Panc1 (cell line): ENCODE measurements at regions of chr9 and their contacts with region 1.

Region 1: GRCh38 chr9:105608721-105609598 is 51.0 kb downstream of the FKTN start:
- DNase-seq: peak; percentile 1
- ATAC-seq: peak; percentile 68; the same call in 1 of the 2 replicates
- H3K4me3 ChIP-seq: no peak overlapping the region
- H3K27ac ChIP-seq: no peak overlapping the region
- H3K4me1 ChIP-seq: no peaks in the 10 kb centered on the region
- H3K27me3 ChIP-seq: no peaks in the 10 kb centered on the region
- CTCF ChIP-seq: peak; percentile 55; the same call in 1 of the 2 replicates

Region 2: DNA sequence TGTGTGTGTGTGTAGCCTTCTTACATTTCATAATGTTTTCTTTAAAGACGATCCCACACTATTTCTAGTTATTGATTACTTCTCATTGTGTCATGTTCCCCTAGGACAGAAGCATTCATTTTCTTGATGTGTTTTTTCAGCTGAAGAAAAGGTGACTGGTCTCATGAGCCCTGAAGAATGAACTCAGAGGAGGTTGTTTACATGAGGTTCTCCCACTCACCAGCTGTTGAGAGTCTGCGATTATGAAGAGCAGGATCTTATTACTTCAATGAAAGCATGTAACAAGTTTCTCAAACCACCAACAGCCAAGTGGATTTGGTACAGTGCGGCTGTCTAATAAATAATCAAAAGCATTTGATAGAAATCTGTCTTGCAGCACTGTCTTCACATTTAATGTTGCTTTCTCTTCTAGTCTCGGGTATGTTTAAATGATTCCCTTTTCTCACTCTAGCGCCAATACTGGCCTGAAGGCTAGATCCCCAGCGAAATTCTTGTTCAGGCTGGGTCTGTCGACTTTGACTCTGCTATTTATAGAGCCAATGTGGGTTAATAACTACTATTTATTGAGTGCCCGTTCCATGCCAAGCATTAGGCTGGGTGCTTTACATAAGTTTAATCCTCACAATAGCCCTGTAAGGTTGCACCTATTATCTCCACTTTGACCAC is 170.7 kb before region 1 on chr9:
- CTCF ChIA-PET with region 1: no interaction called
- POLR2A ChIA-PET with region 1: no interaction called
- in situ Hi-C with region 1: no loop called
- intact Hi-C with region 1: no loop called
- DNase-seq: no peak
- ATAC-seq: no peak
- H3K4me3 ChIP-seq: no peak overlapping the region
- H3K27ac ChIP-seq: no peak overlapping the region
- H3K4me1 ChIP-seq: no peaks in the 10 kb centered on the region
- H3K27me3 ChIP-seq: no peaks in the 10 kb centered on the region
- CTCF ChIP-seq: no peak

Region 3: DNA sequence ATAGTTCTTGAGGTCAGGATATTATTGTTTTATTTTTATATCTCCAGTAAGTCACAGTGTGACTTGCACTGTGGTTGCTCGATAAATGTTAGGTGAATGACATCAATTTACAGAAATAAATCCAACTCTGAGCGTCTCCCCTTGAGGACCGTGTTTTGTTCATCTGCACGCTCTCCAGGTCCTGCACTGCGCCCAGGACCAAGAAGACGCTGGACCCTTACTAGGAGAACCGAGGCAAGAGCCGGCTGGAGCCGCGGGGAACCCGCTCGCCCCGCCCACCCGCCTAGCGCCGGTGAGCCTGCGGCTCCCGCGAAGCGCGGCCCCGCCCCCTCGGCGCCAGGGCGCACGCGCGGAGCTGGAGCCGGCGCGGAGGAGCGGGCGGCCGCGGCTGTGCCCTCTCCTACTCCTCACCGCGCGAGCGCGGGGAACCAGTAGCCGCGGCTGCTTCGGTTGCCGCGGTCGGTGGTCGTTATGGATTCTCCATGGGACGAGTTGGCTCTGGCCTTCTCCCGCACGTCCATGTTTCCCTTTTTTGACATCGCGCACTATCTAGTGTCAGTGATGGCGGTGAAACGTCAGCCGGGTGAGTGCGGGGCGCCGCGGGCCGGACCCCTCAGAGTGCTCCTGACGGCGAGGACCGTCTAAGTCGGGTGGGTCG is 85.4 kb after region 1 on chr9 and contains the start of gene TMEM38B:
- CTCF ChIA-PET with region 1: no interaction called
- POLR2A ChIA-PET with region 1: no interaction called
- in situ Hi-C with region 1: no loop called
- intact Hi-C with region 1: loop called (anchors 1 kb)
- DNase-seq: no peak
- ATAC-seq: peak; percentile 95
- H3K4me3 ChIP-seq: peak within 1 kb of the TSS; percentile 70 to 85
- H3K27ac ChIP-seq: peak within 1 kb of the TSS; percentile 77
- H3K4me1 ChIP-seq: peaks cover 17% of the 10 kb centered on the region
- H3K27me3 ChIP-seq: 0 out of 2 replicates have a peak, but pooled peaks cover 4% of the 10 kb centered on the region
- CTCF ChIP-seq: no peak
- total RNA-seq, gene TMEM38B: 30.6 TPM